Activated CD8-positive, alpha-beta T cell treated with anti-CD3 and anti-CD28 coated beads for 36 hours (primary cell): ENCODE measurements at regions of chr9 and their contacts with region 1.

Region 1: GRCh38 chr9:24051587-24051986 is 225.5 kb upstream of the ELAVL2 start:
- DNase-seq: no peak
- ATAC-seq: no peak
- H3K4me3 Mint-ChIP-seq: no peak overlapping the region
- H3K27ac Mint-ChIP-seq: no peak overlapping the region
- H3K4me1 Mint-ChIP-seq: no peaks in the 10 kb centered on the region
- H3K27me3 Mint-ChIP-seq: no peaks in the 10 kb centered on the region
- CTCF ChIP-seq: no peak

Region 2: GRCh38 chr9:24118190-24118589 is 66.6 kb after region 1 on chr9:
- CTCF ChIA-PET with region 1: no interaction called
- POLR2A ChIA-PET with region 1: no interaction called
- intact Hi-C with region 1: loop called (anchors 10 kb)
- DNase-seq: no peak
- ATAC-seq: no peak
- H3K4me3 Mint-ChIP-seq: no peak overlapping the region
- H3K27ac Mint-ChIP-seq: no peak overlapping the region
- H3K4me1 Mint-ChIP-seq: no peaks in the 10 kb centered on the region
- H3K27me3 Mint-ChIP-seq: no peaks in the 10 kb centered on the region
- CTCF ChIP-seq: no peak